ENCODE measurements at regions of chr3 and their contacts with region 1.

Region 1: DNA sequence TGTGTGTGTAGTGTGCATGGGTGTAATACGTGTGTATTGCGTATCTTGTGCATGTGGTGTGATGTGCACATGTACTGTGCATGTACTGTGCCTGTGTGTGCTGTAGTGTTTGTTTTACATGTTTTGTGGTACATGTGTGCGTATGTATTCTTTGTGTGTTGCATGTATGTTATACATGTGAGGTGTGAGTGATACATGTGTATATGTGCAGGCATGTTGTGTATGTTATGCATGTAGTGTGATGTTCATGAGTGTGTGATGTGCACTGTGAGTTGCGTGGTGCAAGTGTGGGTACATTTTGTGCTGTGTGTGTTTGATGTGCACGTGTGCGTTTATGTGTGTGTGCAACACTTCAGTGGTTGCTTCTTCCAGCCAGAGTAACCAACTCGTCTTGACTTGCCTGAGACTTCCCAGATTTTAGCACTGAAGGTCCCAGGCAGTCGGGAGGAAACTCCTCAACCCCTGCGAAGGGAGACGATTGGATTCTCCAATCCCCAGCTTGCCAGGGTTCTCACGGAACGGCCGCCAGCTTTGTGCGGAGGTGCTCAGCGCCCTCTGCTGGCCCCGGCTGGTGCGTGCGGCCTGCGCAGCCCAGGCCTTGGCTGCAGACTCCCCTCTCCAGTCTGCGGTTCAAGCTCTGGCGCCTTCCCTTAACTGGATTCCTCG is 3.6 kb downstream of the GALNT15 start:
- DNase-seq: peak; percentile 96

Region 2: DNA sequence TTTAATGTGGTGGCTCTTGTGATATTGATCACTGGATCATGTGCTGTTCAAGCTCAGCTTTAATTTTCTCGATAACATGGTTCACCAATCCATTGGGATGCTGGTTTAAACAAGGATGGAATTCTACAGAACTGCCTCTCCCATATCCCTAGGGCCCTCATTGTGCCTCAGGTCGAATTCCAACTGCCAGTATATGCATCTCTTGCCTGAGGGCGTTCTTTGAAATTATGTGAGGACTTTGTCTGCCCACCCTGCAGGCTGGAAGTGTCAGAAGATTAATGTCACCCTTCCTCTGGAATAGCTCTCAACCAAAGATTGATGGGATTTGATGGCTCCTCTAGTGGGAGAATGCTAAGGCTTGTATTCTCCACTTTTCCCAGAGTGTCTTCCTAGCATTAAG is 179.2 kb before region 1 on chr3:
- intact Hi-C with region 1: no loop called
- DNase-seq: no peak

Region 3: DNA sequence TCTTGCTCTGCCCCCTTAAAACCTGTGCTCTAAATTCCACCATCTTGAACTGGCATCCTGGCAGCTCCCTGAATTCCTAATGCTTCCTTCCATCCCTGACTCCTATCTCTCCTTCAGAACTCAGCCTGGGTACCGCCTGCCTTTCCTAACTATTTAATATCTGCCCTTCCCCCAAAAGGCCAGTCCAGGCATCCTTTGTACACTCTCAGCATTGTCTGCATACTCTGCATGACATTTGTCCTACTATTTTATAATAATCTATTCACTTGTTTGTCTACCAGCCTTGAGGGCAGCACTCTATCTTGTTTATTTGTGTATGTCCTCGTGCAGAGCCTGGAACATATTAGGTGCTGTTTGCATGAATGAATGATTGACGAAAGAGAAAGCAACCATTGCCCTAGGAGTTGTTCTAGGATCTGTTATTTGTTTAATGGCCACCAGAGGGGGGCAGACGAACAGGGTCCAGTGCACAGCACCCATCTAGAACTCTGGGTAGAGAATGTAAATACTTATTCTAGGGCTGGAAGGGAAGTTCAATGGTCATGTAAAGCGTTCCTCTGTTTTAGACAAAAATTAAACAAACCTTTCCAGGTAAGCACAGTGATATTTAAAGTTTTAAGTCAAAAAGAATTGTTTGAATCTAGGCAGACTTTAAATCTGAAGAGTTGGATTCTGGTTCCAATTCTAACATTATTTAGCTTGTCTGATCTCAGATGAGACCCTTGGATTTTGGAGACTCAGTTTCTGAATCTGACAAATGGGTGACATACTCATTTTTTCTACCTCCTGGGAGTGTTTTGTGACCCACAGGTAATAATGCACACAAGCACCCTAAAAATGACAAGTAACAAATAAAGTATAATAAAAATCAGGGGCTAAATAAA is 129.4 kb before region 1 on chr3:
- intact Hi-C with region 1: loop called (anchors 2 kb)
- DNase-seq: no peak

Region 4: GRCh38 chr3:16056210-16056607 is 121.9 kb before region 1 on chr3:
- intact Hi-C with region 1: loop called in 1 of 2 experiments (anchors 2 kb)
- DNase-seq: no peak

Region 5: DNA sequence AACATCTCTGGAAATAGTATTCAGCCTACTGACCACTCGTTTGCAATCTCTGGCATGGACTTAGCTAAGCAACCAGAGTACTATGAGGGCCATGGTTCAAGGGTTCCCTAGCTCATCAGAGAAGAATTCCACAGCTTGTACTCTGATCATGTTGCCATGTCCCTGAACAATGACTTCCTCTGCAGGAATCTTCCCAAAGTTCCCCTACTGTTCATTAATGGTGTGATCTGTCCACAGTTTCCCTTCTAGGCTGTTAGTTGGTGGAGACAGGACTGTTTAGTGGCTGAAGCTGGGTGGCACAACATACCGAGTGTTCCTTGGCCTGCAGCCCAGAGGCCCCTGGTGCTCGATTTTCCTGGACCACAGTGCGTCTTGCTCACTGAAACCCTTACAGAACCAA is 48.0 kb before region 1 on chr3:
- intact Hi-C with region 1: loop called in 1 of 2 experiments (anchors 2 kb)
- DNase-seq: no peak